MCF 10A (cell line): ENCODE measurements at regions of chr2 and their contacts with region 1.

Region 1: DNA sequence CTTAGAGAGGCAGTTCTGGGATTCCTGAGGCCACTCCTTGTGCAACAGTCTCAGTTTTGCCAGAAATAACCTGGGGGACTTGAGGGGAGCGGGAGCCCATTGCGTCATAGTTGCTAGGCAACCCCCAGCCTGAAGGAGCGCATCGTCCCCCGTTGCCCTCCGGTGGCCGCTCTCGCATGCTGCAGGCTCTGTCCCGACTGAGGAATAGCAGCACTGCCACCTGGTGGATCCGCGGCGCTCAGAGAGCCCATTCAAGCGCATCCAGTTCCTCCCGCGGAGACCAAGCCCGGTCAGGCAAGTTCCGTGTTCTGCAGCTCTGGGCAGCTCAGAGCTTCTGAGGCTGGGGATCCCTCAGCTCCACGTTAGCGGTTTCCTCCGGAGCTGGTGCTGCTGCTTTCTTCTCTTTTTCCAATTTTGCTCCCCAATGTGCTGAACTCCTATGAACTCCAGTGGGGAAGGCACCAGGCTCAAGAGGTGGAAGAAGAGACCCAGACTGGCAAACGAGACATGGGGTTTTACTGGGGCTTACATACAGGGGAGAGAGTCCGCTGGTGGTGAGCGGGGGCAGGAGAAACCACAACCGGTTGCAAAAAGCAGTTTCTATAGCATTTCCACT is 15.1 kb downstream of the SLC4A3 start:
- DNase-seq: peak; percentile 95
- H3K4me3 Mint-ChIP-seq: no peak overlapping the region
- H3K27ac Mint-ChIP-seq: no peak overlapping the region
- H3K4me1 Mint-ChIP-seq: peaks cover 12% of the 10 kb centered on the region
- H3K27me3 Mint-ChIP-seq: no peaks in the 10 kb centered on the region
- CTCF ChIP-seq: peak; percentile 96

Region 2: GRCh38 chr2:219177552-219178376 is 464.8 kb before region 1 on chr2 and contains the start of gene RETREG2:
- CTCF ChIA-PET with region 1: no interaction called
- POLR2A ChIA-PET with region 1: no interaction called
- intact Hi-C with region 1: no loop called
- DNase-seq: peak; percentile 90
- H3K4me3 Mint-ChIP-seq: peak within 1 kb of the TSS; percentile 82
- H3K27ac Mint-ChIP-seq: peak within 1 kb of the TSS; percentile 93
- H3K4me1 Mint-ChIP-seq: no peaks in the 10 kb centered on the region
- H3K27me3 Mint-ChIP-seq: no peaks in the 10 kb centered on the region
- CTCF ChIP-seq: peak; percentile 32
- total RNA-seq, gene RETREG2: 49.3 and 64.5 TPM in 2 replicates

Region 3: DNA sequence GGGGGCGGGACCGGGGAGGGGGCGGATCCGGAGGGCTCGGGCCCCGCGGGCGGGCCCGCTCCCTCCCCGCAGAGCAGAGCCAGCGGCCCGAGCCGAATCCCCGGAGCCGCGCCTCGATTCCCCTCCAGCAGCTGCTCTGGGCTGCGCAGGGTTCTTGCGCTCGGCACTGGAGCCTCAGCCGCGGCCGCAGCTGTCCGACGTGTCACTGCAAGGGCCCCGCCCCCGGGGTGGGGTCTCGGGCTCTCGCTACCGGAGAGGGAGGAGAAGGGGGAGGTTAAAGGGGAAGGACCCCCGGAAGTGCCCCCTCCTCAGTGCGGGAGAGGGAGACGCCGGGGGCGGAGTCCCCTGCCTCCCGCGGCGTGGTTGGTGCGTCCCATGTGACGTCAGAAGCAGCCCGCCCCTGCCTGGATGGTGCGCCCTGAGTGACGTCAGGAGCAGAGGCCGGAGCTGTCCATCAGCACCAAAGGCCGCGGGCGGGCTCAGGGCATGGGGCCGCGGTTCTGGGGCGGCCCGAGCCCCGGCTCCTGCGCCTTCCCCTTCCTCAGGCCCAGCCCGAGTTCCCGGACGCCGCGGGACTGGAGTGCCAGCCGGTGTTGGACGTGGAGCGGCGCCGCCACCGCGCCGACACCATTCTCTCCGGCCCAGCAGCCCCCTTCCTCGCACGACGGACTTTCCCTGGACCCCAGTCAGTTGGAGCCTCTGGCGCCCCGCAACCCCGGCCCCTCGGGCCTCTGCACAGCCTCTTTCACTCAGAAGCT is 98.8 kb before region 1 on chr2 and contains the starts of genes CHPF and TMEM198:
- CTCF ChIA-PET with region 1: interaction called, 42 read pairs
- POLR2A ChIA-PET with region 1: interaction called, 7 read pairs
- intact Hi-C with region 1: loop called (anchors 1 kb)
- DNase-seq: peak; percentile 98
- H3K4me3 Mint-ChIP-seq: peak within 1 kb of the TSS; percentile 75
- H3K27ac Mint-ChIP-seq: peak within 1 kb of the TSS; percentile 57
- H3K4me1 Mint-ChIP-seq: peaks cover 12% of the 10 kb centered on the region
- H3K27me3 Mint-ChIP-seq: no peaks in the 10 kb centered on the region
- CTCF ChIP-seq: no peak
- total RNA-seq, gene CHPF: 81.2 and 105 TPM in 2 replicates
- total RNA-seq, gene TMEM198: 5.3 and 6.3 TPM in 2 replicates

Region 4: GRCh38 chr2:219560037-219560892 is 82.3 kb before region 1 on chr2:
- CTCF ChIA-PET with region 1: interaction called, 15 read pairs
- POLR2A ChIA-PET with region 1: no interaction called
- intact Hi-C with region 1: no loop called
- DNase-seq: no peak
- H3K4me3 Mint-ChIP-seq: no peak overlapping the region
- H3K27ac Mint-ChIP-seq: no peak overlapping the region
- H3K4me1 Mint-ChIP-seq: no peaks in the 10 kb centered on the region
- H3K27me3 Mint-ChIP-seq: no peaks in the 10 kb centered on the region
- CTCF ChIP-seq: peak; percentile 80

Region 5: GRCh38 chr2:219612577-219613286 is 29.8 kb before region 1 on chr2:
- CTCF ChIA-PET with region 1: no interaction called
- POLR2A ChIA-PET with region 1: no interaction called
- intact Hi-C with region 1: no loop called
- DNase-seq: no peak
- H3K4me3 Mint-ChIP-seq: no peak overlapping the region
- H3K27ac Mint-ChIP-seq: no peak overlapping the region
- H3K4me1 Mint-ChIP-seq: no peaks in the 10 kb centered on the region
- H3K27me3 Mint-ChIP-seq: no peaks in the 10 kb centered on the region
- CTCF ChIP-seq: no peak

Region 6: GRCh38 chr2:219658196-219658846 is 15.7 kb after region 1 on chr2:
- CTCF ChIA-PET with region 1: interaction called, 24 read pairs
- POLR2A ChIA-PET with region 1: interaction called, 10 read pairs
- intact Hi-C with region 1: no loop called
- DNase-seq: no peak
- H3K4me3 Mint-ChIP-seq: no peak overlapping the region
- H3K27ac Mint-ChIP-seq: no peak overlapping the region
- H3K4me1 Mint-ChIP-seq: peaks cover 8% of the 10 kb centered on the region
- H3K27me3 Mint-ChIP-seq: no peaks in the 10 kb centered on the region
- CTCF ChIP-seq: no peak

Region 7: DNA sequence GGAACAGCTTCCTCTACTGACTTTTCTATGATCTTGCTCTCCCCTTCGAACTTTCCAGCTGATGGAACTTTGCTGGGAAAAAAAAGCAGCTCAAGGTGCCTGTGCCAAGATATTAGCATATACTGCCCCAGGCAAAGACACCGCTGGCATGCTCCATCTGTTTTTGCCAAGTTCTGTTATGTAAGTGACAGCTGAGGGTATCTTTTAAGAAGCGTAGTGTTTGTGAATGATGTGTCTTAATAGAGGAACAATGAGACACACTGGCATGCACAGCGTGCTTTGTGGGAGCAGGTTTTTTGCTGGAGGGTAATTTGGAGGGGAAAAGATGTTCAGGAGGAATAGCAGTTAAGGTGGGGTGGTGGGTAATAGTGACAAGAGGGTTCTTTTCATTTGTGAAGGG is 32.6 kb after region 1 on chr2:
- CTCF ChIA-PET with region 1: interaction called, 10 read pairs
- POLR2A ChIA-PET with region 1: interaction called, 12 read pairs
- intact Hi-C with region 1: no loop called
- DNase-seq: peak; percentile 71
- H3K4me3 Mint-ChIP-seq: no peak overlapping the region
- H3K27ac Mint-ChIP-seq: no peak overlapping the region
- H3K4me1 Mint-ChIP-seq: peaks cover 8% of the 10 kb centered on the region
- H3K27me3 Mint-ChIP-seq: peaks cover 20% of the 10 kb centered on the region
- CTCF ChIP-seq: no peak

Region 8: DNA sequence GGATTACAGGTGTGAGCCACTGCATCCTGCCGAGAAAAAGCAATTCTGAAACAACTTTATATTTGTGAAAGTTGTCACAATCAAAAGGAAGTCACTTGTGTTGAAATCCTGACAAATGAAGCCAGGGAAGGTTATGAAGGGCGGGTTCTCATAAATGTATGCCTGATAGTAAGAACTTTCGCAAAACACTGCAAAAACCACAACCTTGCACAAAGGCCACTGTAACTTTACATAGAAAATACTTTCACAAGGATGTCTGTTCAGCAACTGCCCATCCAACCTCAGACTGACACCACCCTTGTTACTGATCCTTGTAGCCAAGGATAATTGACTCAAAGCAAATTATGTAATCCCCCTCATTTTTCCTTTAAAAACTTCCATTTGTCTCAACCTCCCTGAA is 75.5 kb after region 1 on chr2:
- CTCF ChIA-PET with region 1: no interaction called
- POLR2A ChIA-PET with region 1: no interaction called
- intact Hi-C with region 1: no loop called
- DNase-seq: peak; percentile 57
- H3K4me3 Mint-ChIP-seq: no peak overlapping the region
- H3K27ac Mint-ChIP-seq: no peak overlapping the region
- H3K4me1 Mint-ChIP-seq: peaks cover 23% of the 10 kb centered on the region
- H3K27me3 Mint-ChIP-seq: no peaks in the 10 kb centered on the region
- CTCF ChIP-seq: no peak